ENCODE measurements at regions of chr2 and their contacts with region 1.

Region 1: DNA sequence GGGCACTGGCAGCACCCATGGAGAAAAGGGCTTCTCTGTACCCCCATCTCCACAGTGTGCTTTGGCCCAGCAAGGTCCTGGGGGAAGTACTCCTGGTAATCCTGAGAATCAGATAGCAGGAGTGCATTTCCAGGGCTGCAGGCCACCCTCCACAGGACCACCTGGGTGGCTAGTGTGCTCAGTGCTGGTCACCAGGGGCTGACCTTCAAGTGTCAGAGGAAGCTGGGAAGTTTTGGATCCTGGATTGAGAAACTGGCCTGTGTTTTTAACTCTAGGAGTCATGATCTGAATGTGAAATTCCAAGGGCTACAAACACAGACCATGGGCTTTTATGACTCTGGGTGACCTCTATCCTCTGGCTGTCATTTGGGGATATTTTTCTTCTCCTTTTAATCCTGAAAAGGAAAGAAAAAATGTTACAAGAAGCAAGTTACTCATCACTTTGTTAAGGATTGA is 9.3 kb downstream of the RHOB start:
- DNase-seq: no peak
- ATAC-seq: no peak
- H3K4me3 ChIP-seq: no peak overlapping the region
- H3K4me3 Mint-ChIP-seq: no peak overlapping the region
- H3K27ac ChIP-seq: no peak overlapping the region
- H3K27ac Mint-ChIP-seq: no peak overlapping the region
- H3K4me1 ChIP-seq: no peaks in the 10 kb centered on the region
- H3K4me1 Mint-ChIP-seq: no peaks in the 10 kb centered on the region
- H3K27me3 ChIP-seq: peaks cover 4 to 34% of the 10 kb centered on the region in 2 experiments
- H3K27me3 Mint-ChIP-seq: peaks cover 36 to 44% of the 10 kb centered on the region in 2 donors

Region 2: DNA sequence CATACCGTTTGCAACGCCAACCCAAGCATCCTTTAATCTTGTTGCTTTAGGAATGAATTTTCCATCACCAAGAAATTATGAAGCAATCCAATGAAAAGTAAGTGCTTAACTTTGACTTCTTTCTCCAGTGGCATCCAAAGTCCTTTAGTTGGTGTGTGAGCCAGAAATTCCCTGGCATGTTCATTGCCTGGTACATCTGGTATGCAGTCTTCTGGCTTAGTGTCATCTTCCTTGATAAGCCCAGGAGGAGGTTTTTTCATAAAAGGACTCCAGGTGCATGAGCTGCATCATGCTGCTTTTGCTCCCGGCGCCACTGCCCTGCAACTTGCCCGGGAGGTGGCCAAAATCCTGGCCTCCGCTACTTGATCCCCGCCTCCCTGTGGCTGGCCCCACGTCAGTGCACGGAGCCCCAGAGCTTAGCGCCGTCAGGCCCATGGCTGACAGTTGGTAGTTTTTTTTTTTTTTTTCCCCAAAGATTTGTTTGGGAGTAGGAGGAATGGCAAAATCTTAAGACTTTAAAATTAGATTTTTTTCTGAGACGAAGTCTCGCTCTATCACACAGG is 164.2 kb before region 1 on chr2:
- CTCF ChIA-PET with region 1: no interaction called
- POLR2A ChIA-PET with region 1: no interaction called
- DNase-seq: no peak
- ATAC-seq: no peak
- H3K4me3 ChIP-seq: no peak overlapping the region
- H3K4me3 Mint-ChIP-seq: no peak overlapping the region
- H3K27ac ChIP-seq: no peak overlapping the region
- H3K27ac Mint-ChIP-seq: no peak overlapping the region
- H3K4me1 ChIP-seq: peaks cover 0 to 6% of the 10 kb centered on the region in 2 experiments
- H3K4me1 Mint-ChIP-seq: peaks cover 5 to 14% (median 7%) of the 10 kb centered on the region in 3 donors
- H3K27me3 ChIP-seq: no peaks in the 10 kb centered on the region
- H3K27me3 Mint-ChIP-seq: no peaks in the 10 kb centered on the region

Region 3: GRCh38 chr2:20611077-20611843 is 155.1 kb after region 1 on chr2:
- CTCF ChIA-PET with region 1: no interaction called
- POLR2A ChIA-PET with region 1: interaction called in 1 of 2 experiments, 10 read pairs
- DNase-seq: no peak
- ATAC-seq: no peak
- H3K4me3 ChIP-seq: no peak overlapping the region
- H3K4me3 Mint-ChIP-seq: no peak overlapping the region
- H3K27ac ChIP-seq: no peak overlapping the region
- H3K27ac Mint-ChIP-seq: no peak overlapping the region
- H3K4me1 ChIP-seq: no peaks in the 10 kb centered on the region
- H3K4me1 Mint-ChIP-seq: no peaks in the 10 kb centered on the region
- H3K27me3 ChIP-seq: no peaks in the 10 kb centered on the region
- H3K27me3 Mint-ChIP-seq: peaks cover 0 to 1% of the 10 kb centered on the region in 2 donors

Region 4: DNA sequence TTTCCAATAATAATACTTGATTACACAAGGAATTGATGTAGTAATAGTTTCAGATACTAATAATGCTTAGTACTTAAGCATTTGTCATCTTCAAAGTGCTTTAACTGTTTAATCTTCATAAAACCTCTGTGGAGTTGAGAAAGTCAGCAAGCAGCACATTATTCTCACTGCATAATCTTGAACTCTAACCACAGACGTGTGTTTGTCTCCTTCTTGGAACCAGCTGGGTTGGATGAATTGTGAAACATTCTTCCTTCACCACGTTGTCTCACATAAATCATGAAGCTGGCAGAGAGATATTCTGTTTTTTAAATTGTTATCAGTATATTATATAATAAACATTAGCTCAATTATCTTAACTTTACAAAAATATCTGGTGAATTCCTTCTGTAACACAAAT is 421.8 kb after region 1 on chr2:
- CTCF ChIA-PET with region 1: no interaction called
- POLR2A ChIA-PET with region 1: no interaction called
- DNase-seq: no peak
- ATAC-seq: no peak
- H3K4me3 ChIP-seq: no peak overlapping the region
- H3K4me3 Mint-ChIP-seq: no peak overlapping the region
- H3K27ac ChIP-seq: no peak overlapping the region
- H3K27ac Mint-ChIP-seq: no peak overlapping the region
- H3K4me1 ChIP-seq: no peaks in the 10 kb centered on the region
- H3K4me1 Mint-ChIP-seq: no peaks in the 10 kb centered on the region
- H3K27me3 ChIP-seq: peaks cover 0 to 10% of the 10 kb centered on the region in 2 experiments
- H3K27me3 Mint-ChIP-seq: peaks cover 11 to 22% of the 10 kb centered on the region in 2 donors

Measured in T-cell (primary cell).